GM10248 (cell line): ENCODE measurements at regions of chr1 and their contacts with region 1.

Region 1: DNA sequence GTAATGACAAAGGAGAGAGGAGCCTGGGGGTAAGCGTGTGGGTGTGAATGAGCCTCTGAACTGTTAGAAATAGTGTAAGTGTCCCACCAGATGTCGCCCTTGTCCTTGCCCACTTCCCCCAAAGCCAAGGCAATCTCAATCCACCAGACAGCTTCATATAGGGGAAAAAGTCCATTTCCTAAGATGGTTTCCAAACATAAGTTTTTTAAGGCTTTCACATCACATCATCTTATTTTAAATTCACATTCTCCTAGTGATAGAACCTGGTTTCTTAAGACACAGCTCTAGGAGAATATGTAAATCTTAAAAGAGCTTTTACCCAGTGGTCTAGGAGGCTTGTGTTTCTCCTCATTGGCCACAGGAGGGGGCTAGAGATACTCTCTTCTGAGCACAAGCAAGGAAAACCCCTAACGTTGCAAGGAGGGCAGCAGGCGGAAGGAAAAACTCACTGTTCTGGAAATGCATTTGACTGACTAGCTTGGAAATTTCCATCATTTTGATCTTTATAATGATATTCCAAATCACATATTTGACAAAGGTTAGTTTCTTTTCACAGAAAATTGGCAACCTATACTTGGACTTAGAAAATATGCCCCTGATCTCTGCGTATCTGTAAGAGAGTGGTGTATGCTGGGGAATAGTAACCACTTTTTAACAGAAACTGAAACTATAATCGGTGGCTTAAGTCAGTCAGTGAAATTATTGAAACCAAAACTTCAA is 51.9 kb upstream of the LPAR3 start:
- DNase-seq: peak; percentile 63
- CTCF ChIP-seq: peak; percentile 86

Region 2: DNA sequence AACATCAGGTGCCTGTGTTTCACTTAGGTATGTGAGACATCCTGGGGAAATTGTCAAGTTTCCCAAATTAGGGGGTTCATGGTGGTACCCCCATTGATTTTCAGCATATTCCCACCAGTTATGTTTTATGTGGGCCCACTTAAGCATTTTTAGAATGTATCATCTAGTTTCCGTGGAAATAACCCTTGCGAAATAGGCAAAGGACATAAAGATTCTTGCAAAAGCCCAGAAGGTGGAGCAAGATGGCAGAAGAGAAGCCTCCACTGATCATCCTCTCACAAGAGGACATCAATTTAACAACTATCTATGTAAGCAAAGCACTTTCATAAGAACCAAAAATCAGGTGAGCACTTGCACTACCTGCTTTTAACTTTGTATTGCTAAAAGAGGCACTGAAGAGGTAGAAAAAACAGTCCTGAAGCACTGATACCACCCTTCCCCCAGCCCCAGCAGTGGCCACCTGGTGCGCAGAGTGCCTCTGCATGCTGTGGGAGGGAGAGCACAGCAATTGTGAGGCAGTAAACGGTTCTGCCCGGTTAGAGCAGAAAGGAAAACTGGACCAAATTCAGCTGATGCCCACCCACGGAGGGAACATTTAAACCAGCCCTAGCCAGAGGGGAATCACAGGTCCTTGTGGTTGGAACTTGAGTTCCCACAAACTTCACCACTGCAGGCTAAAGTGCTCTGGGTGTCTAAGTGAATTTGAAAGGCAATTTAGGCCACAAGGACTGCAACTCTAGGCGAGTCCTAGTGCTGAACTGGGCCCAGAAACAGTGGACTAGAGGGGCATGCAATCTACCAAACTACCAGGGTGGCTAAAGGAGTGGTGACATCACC is 28.8 kb after region 1 on chr1:
- CTCF ChIA-PET with region 1: interaction called, 21 read pairs
- POLR2A ChIA-PET with region 1: interaction called, 10 read pairs
- DNase-seq: no peak
- CTCF ChIP-seq: peak; percentile 19

Region 3: GRCh38 chr1:85027242-85027983 is 82.5 kb after region 1 on chr1:
- CTCF ChIA-PET with region 1: interaction called, 159 read pairs
- POLR2A ChIA-PET with region 1: interaction called, 3 read pairs
- DNase-seq: peak; percentile 35
- CTCF ChIP-seq: peak; percentile 32

Region 4: DNA sequence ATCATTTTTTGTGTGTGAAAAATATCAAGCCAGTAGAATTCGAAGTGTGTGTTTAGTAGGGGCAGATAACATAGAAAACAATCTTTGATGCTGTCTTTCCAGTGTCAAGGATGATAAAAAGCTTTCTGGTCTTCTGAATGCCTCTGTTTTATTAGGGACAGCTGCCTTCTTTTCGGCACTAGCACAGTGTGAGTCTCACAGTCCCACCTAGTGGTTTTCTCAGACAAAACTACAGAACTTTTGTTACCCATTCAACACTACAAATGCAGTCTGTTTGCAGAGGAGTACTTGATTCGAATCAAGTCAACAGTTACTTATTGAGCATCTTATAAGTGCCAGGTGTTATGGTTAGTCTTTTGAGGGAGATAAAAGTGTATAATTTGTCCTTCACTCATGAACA is 134.0 kb after region 1 on chr1:
- CTCF ChIA-PET with region 1: interaction called, 14 read pairs
- POLR2A ChIA-PET with region 1: no interaction called
- DNase-seq: no peak
- CTCF ChIP-seq: peak; percentile 9

Region 5: GRCh38 chr1:85240174-85240601 is 295.3 kb after region 1 on chr1:
- CTCF ChIA-PET with region 1: interaction called, 12 read pairs
- POLR2A ChIA-PET with region 1: no interaction called
- DNase-seq: peak; percentile 24
- CTCF ChIP-seq: peak; percentile 31

Region 6: DNA sequence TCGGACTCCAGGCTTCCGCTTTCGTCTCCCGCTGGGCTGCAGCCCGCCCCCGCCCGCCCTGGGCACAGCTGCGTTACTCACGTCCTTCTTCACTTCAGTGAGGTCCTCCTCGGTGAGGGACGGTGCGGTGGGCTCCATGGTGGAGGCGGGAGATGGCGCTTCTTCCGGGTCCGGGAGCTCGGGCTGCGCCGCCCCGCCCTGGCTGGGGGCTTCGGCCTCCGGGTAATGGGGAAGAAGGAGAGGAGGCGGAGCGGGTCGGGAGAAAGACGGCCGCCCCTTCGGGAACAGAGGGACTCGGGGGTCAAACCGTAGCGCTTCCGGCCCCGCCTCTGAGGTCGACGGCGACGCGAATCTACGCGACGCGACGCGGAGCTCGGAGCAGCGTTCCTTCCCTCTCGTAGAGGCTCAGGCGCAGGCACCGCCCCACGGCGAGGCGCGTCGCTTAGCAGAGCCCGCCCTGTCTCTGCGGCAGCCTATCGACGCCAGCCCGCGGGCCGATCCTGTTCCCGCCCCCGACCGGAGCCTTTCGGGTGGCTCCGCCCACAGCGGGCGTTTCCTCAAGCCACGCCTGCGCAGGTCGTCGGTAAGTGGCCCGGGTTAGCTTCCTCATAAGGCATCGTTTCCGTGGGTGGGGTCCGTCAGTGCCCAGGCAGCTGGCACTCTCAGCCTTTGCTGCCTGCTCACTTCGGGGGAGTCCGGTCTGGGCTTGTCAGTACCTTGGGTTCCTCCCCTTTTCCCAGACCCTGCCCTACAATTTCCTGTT is 331.5 kb after region 1 on chr1 and contains the start of gene BCL10:
- CTCF ChIA-PET with region 1: interaction called, 23 read pairs
- POLR2A ChIA-PET with region 1: no interaction called
- DNase-seq: peak; percentile 98
- CTCF ChIP-seq: no peak